ENCODE measurements at regions of chr14 and their contacts with region 1.

Region 1: DNA sequence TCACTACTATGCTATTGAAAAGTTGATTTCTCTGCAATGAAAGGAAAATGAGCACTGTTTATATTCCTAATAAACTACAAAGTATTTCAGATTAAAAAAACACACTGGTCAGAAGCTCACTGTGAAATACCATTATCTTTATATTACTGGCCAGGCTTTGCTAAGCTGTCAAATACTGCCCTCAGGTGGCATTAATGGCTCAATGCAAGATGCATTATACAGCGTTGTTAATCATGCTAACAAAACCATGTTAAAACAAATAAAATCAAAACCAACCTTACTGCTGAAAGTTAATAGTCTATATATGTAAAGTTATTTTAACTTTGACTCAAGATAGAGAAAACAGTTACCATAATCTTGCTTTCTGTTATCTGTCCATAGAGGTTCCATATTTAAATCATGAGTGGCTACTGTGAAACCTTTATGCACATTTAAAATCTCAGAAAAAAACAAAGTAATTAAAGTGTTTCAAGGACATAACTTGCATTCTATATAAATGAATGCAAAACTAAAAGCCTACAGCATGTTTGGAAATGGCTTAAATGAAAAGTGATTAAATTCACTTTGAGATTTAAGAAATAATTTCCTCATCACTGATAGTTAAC is 121.7 kb downstream of the RALGAPA1 start:
- DNase-seq: peak; percentile 76
- H3K4me3 ChIP-seq: no peak overlapping the region
- H3K27ac ChIP-seq: no peak overlapping the region
- H3K4me1 ChIP-seq: no peaks in the 10 kb centered on the region
- H3K27me3 ChIP-seq: no peaks in the 10 kb centered on the region

Region 2: GRCh38 chr14:35140718-35141581 is 546.5 kb before region 1 on chr14:
- in situ Hi-C with region 1: loop called (anchors 25 kb)
- DNase-seq: peak; percentile 59
- H3K4me3 ChIP-seq: no peak overlapping the region
- H3K27ac ChIP-seq: no peak overlapping the region
- H3K4me1 ChIP-seq: no peaks in the 10 kb centered on the region
- H3K27me3 ChIP-seq: no peaks in the 10 kb centered on the region

Region 3: DNA sequence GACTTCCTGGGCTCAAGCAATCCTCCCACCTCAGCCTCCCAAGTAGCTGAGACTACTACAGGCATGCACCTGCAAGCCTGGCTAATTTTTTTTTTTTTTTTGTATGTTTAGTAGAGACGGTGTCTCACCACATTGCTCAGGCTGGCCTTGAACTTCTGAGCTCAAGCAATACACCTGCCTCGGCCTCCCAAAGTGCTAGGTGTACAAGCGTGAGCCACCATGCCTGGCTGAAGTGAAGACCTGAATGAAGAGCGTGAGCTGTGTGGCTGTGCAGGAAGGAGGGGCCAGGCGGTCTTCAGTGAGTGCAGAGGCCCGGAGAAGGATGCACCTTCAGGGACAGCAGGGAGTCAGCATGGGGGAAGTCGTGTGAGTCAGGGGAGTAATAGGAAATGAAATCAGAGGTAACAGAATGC is 268.0 kb before region 1 on chr14:
- in situ Hi-C with region 1: no loop called
- DNase-seq: peak; percentile 63
- H3K4me3 ChIP-seq: no peak overlapping the region
- H3K27ac ChIP-seq: peak overlapping the region; percentile 74
- H3K4me1 ChIP-seq: peaks cover 53% of the 10 kb centered on the region
- H3K27me3 ChIP-seq: no peaks in the 10 kb centered on the region

Region 4: GRCh38 chr14:35438910-35439713 is 248.3 kb before region 1 on chr14:
- in situ Hi-C with region 1: loop called (anchors 25 kb)
- DNase-seq: peak; percentile 38
- H3K4me3 ChIP-seq: no peak overlapping the region
- H3K27ac ChIP-seq: no peak overlapping the region
- H3K4me1 ChIP-seq: no peaks in the 10 kb centered on the region
- H3K27me3 ChIP-seq: no peaks in the 10 kb centered on the region

Region 5: GRCh38 chr14:35459776-35460175 is 227.7 kb before region 1 on chr14:
- in situ Hi-C with region 1: no loop called
- DNase-seq: no peak
- H3K4me3 ChIP-seq: no peak overlapping the region
- H3K27ac ChIP-seq: no peak overlapping the region
- H3K4me1 ChIP-seq: no peaks in the 10 kb centered on the region
- H3K27me3 ChIP-seq: no peaks in the 10 kb centered on the region

Region 6: DNA sequence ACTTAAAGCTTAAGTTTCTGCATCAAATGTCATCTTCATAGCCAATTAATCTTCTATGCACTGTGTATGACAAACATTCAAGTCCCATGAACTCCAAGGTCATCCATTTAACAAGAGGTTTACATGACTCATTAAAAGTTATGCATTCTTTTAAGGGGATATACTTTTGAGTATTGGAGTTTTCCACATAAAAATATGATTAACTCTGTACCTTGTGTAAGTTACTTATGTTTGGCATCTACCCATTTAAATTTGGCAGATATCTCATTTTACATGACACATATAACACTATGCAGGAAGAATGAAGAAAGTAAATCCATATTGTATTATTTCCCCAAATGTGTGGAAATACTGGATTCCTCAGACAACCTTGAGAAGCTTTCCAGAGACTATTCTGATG is 1214.4 kb after region 1 on chr14:
- in situ Hi-C with region 1: no loop called
- DNase-seq: peak; percentile 3
- H3K4me3 ChIP-seq: no peak overlapping the region
- H3K27ac ChIP-seq: no peak overlapping the region
- H3K4me1 ChIP-seq: no peaks in the 10 kb centered on the region
- H3K27me3 ChIP-seq: no peaks in the 10 kb centered on the region